AG04449 (cell line): ENCODE measurements at regions of chr11 and their contacts with region 1.

Region 1: DNA sequence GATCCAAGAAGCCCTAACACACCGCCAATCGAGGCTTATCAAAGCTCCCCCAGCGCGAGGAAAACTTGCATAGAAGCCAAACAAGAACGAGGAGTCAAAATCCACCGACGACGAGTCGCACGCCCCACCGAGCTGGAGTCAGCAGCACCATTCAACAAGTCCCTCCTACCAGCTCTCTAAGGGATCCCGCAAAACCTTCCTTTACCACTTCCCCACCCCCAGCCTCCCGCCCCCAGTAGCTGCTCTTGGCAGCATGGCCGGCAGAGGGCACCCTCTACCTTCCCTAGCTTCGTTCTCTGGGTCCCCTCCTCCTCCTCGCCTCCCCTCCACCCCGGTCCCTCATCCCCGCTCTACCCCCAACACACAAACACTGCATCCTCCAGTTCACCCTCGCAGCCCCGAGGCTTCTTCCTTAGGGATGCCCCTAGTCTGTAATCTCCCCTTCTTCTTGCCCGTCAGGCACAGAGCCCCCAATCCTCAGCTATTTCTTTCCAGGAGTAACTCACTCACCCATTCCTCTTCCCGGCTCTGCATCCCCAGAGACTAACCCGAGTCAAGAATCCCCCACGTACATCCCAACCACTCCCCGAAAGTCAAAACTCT is 1.3 kb downstream of the BDNF start:
- DNase-seq: peak; percentile 52
- H3K4me3 ChIP-seq: peak overlapping the region; percentile 89
- CTCF ChIP-seq: peak; percentile 87

Region 2: GRCh38 chr11:27621405-27622161 is 77.4 kb before region 1 on chr11:
- CTCF ChIA-PET with region 1: no interaction called
- POLR2A ChIA-PET with region 1: no interaction called
- DNase-seq: no peak
- H3K4me3 ChIP-seq: no peak overlapping the region
- CTCF ChIP-seq: no peak

Region 3: GRCh38 chr11:27720277-27720830 is 21.4 kb after region 1 on chr11:
- CTCF ChIA-PET with region 1: interaction called, 132 read pairs
- POLR2A ChIA-PET with region 1: interaction called, 17 read pairs
- DNase-seq: no peak
- H3K4me3 ChIP-seq: peak overlapping the region; percentile 90
- CTCF ChIP-seq: peak; percentile 19

Region 4: GRCh38 chr11:27926981-27927481 is 228.1 kb after region 1 on chr11:
- CTCF ChIA-PET with region 1: interaction called, 6 read pairs
- POLR2A ChIA-PET with region 1: interaction called, 14 read pairs
- DNase-seq: peak; percentile 99
- H3K4me3 ChIP-seq: no peak overlapping the region
- CTCF ChIP-seq: no peak

Region 5: GRCh38 chr11:27934830-27935145 is 235.8 kb after region 1 on chr11:
- CTCF ChIA-PET with region 1: interaction called, 8 read pairs
- POLR2A ChIA-PET with region 1: interaction called, 35 read pairs
- DNase-seq: peak; percentile 93
- H3K4me3 ChIP-seq: no peak overlapping the region
- CTCF ChIP-seq: no peak

Region 6: GRCh38 chr11:28107748-28108618 is 409.0 kb after region 1 on chr11 and contains the starts of genes KIF18A and METTL15:
- CTCF ChIA-PET with region 1: interaction called, 9 read pairs
- POLR2A ChIA-PET with region 1: interaction called, 12 read pairs
- DNase-seq: peak; percentile 95
- H3K4me3 ChIP-seq: peak within 1 kb of the TSS; percentile 73
- CTCF ChIP-seq: no peak

Region 7: GRCh38 chr11:28529540-28530410 is 830.8 kb after region 1 on chr11:
- CTCF ChIA-PET with region 1: interaction called, 30 read pairs
- POLR2A ChIA-PET with region 1: interaction called, 4 read pairs
- DNase-seq: no peak
- H3K4me3 ChIP-seq: no peak overlapping the region
- CTCF ChIP-seq: no peak

Region 8: GRCh38 chr11:28697920-28698827 is 999.2 kb after region 1 on chr11:
- CTCF ChIA-PET with region 1: interaction called, 12 read pairs
- POLR2A ChIA-PET with region 1: no interaction called
- DNase-seq: no peak
- H3K4me3 ChIP-seq: no peak overlapping the region
- CTCF ChIP-seq: peak; percentile 69